CD8-positive, alpha-beta T cell (primary cell): ENCODE measurements at regions of chr21 and their contacts with region 1.

Region 1: DNA sequence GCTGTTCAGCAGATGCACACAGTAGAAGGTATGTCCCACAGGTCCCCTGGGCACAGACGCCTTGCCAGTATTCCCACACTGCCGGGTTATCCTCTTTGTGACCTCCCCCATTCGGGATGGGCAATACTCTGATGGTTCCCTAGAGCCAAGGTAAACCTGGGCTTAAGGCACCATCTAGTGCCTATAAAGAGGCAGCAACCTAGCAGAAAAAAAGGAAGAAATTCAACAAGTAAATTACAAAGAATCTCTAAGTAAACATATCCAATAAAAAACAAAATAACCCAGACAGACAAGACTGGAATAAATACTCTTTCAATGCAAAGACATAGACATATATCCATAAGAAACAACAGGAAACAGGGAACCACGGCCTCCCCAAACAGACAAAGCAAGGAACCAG is 39.4 kb downstream of the HSF2BP start:
- DNase-seq: no peak
- ATAC-seq: no peak
- H3K4me3 ChIP-seq: no peak overlapping the region
- H3K4me3 Mint-ChIP-seq: no peak overlapping the region
- H3K27ac ChIP-seq: no peak overlapping the region
- H3K27ac Mint-ChIP-seq: no peak overlapping the region
- H3K4me1 ChIP-seq: no peaks in the 10 kb centered on the region
- H3K4me1 Mint-ChIP-seq: no peaks in the 10 kb centered on the region
- H3K27me3 ChIP-seq: no peaks in the 10 kb centered on the region
- H3K27me3 Mint-ChIP-seq: peaks cover 2% of the 10 kb centered on the region
- CTCF ChIP-seq: no peak

Region 2: GRCh38 chr21:43315244-43316137 is 304.4 kb before region 1 on chr21:
- CTCF ChIA-PET with region 1: no interaction called
- POLR2A ChIA-PET with region 1: no interaction called
- intact Hi-C with region 1: loop called in 1 of 2 experiments (anchors 5 kb)
- DNase-seq: peak in 7 of 9 experiments; percentile 14 to 60 (median 40)
- ATAC-seq: peak; percentile 82
- H3K4me3 ChIP-seq: no peak overlapping the region
- H3K4me3 Mint-ChIP-seq: no peak overlapping the region
- H3K27ac ChIP-seq: no peak overlapping the region
- H3K27ac Mint-ChIP-seq: peak overlapping the region; percentile 77
- H3K4me1 ChIP-seq: no peaks in the 10 kb centered on the region
- H3K4me1 Mint-ChIP-seq: peaks cover 2% of the 10 kb centered on the region
- H3K27me3 ChIP-seq: no peaks in the 10 kb centered on the region
- H3K27me3 Mint-ChIP-seq: peaks cover 5% of the 10 kb centered on the region
- CTCF ChIP-seq: no peak

Region 3: DNA sequence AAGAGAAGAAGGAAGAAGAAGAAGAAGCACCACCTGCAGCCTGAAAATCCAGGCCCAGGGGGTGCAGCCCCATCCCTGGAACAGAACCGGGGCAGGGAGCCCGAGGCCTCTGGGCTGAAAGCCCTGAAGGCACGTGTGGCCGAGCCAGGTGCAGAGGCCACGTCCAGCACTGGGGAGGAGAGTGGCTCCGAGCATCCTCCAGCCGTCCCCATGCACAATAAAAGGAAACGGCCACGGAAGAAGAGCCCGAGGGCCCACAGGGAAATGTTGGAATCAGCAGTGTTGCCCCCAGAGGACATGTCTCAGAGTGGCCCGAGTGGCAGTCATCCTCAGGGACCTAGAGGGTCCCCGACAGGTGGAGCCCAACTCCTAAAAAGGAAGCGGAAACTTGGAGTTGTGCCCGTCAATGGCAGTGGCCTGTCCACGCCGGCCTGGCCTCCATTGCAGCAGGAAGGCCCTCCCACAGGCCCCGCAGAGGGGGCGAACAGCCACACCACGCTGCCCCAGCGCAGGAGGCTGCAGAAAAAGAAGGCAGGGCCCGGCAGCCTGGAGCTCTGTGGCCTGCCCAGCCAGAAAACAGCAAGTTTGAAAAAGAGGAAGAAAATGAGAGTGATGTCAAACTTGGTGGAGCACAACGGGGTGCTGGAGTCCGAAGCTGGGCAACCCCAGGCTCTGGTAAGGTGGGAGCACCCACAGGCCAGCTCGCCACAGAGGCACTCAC is 67.9 kb after region 1 on chr21:
- CTCF ChIA-PET with region 1: no interaction called
- POLR2A ChIA-PET with region 1: no interaction called
- intact Hi-C with region 1: loop called in 1 of 2 experiments (anchors 5 kb)
- DNase-seq: no peak
- ATAC-seq: no peak
- H3K4me3 ChIP-seq: no peak overlapping the region
- H3K4me3 Mint-ChIP-seq: no peak overlapping the region
- H3K27ac ChIP-seq: no peak overlapping the region
- H3K27ac Mint-ChIP-seq: no peak overlapping the region
- H3K4me1 ChIP-seq: no peaks in the 10 kb centered on the region
- H3K4me1 Mint-ChIP-seq: no peaks in the 10 kb centered on the region
- H3K27me3 ChIP-seq: no peaks in the 10 kb centered on the region
- H3K27me3 Mint-ChIP-seq: no peaks in the 10 kb centered on the region
- CTCF ChIP-seq: no peak

Region 4: DNA sequence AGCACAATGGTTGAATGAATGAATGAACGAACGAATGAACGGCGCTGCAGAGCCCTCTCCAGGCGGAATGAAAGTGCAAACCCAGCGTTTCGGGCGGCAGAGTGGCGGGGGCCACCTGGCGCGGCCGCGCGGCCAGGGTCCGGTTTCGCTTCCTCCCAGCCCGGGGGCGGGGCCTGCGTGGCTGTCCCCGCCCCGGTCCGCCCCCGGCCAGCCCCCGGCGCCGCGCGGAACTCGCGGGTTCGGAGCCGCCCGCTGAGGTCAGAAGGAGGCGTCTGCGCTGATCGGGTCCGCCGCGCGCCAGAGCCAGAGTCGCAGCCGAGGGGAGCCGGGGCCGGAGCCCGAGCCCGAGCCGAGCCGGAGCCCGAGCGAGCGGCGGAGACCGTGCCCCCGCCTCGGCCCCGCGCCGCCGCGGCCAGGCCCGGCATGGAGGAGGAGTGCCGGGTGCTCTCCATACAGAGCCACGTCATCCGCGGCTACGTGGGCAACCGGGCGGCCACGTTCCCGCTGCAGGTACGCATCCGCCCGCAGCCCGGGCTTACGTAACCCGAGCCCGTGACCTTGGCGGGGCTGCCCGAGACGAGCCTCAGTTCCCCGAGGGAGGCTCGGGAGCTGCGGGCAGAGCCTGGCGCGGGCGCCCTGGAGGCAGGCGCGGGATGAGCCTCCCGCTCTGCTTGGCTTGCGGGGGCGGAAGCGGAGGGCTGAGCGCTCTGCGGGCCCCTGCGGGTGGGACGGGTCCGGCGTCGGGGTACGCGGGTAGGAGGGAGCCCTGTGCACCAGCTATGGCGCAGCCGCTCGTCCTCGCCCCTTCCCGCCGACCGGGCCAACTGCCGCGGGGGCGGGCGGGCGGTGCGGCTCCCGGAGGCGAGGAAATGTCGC is 99.3 kb after region 1 on chr21 and contains the start of gene PDXK:
- CTCF ChIA-PET with region 1: no interaction called
- POLR2A ChIA-PET with region 1: no interaction called
- intact Hi-C with region 1: no loop called
- DNase-seq: peak; percentile 49 to 91 (median 75)
- ATAC-seq: peak; percentile 77
- H3K4me3 ChIP-seq: peak within 1 kb of the TSS; percentile 70 to 83
- H3K4me3 Mint-ChIP-seq: peak within 1 kb of the TSS; percentile 84
- H3K27ac ChIP-seq: peak within 1 kb of the TSS; percentile 48 to 74
- H3K27ac Mint-ChIP-seq: peak within 1 kb of the TSS; percentile 27
- H3K4me1 ChIP-seq: peaks cover 16% of the 10 kb centered on the region
- H3K4me1 Mint-ChIP-seq: peaks cover 29% of the 10 kb centered on the region
- H3K27me3 ChIP-seq: no peaks in the 10 kb centered on the region
- H3K27me3 Mint-ChIP-seq: no peaks in the 10 kb centered on the region
- CTCF ChIP-seq: no peak
- total RNA-seq, gene PDXK: 60.3 to 71.1 TPM

Region 5: DNA sequence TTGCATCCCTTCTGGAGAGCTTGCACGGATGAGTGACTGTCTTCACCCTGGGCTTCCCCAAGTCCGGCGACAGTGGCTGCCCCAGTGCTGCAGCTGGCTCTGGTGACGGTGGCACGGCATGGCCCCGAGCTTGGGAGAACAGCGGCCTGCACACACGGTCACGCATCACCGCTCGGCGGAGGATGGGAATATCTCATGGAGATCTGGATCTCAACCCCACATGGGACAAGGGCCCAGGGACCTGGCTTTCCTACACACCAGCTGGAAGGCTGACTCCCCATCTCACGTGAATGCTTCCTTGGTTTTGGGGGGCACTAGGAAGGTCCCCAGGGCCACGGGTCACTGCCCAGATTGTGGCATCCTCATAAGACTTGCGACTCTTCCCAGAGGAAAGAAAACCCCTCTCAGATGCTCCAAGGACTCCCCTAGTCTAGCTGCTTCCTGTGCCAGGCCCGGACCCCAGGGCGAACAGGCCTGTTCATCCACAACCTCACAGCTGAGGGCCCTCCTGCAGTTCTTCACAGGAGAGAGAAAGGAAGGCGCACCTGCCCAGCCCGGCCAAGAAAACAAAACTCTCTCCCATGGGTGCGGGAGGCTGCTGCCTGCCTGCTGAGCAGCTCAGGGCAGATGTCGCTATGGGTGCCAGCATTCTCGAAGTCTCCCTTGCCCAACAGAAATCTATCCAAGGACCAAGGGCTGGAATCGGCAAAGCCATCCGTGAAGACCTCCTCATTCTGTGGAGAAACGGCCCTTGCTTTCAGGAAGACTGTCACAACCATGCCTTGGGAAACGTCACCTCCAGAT is 709.4 kb after region 1 on chr21:
- CTCF ChIA-PET with region 1: no interaction called
- POLR2A ChIA-PET with region 1: no interaction called
- intact Hi-C with region 1: no loop called
- DNase-seq: no peak
- ATAC-seq: no peak
- H3K4me3 ChIP-seq: no peak overlapping the region
- H3K4me3 Mint-ChIP-seq: no peak overlapping the region
- H3K27ac ChIP-seq: no peak overlapping the region
- H3K27ac Mint-ChIP-seq: no peak overlapping the region
- H3K4me1 ChIP-seq: no peaks in the 10 kb centered on the region
- H3K4me1 Mint-ChIP-seq: no peaks in the 10 kb centered on the region
- H3K27me3 ChIP-seq: no peaks in the 10 kb centered on the region
- H3K27me3 Mint-ChIP-seq: no peaks in the 10 kb centered on the region
- CTCF ChIP-seq: no peak